Activated CD4-positive, alpha-beta T cell treated with anti-CD3 and anti-CD28 coated beads for 36 hours (primary cell): ENCODE measurements at regions of chr2 and their contacts with region 1.

Region 1: DNA sequence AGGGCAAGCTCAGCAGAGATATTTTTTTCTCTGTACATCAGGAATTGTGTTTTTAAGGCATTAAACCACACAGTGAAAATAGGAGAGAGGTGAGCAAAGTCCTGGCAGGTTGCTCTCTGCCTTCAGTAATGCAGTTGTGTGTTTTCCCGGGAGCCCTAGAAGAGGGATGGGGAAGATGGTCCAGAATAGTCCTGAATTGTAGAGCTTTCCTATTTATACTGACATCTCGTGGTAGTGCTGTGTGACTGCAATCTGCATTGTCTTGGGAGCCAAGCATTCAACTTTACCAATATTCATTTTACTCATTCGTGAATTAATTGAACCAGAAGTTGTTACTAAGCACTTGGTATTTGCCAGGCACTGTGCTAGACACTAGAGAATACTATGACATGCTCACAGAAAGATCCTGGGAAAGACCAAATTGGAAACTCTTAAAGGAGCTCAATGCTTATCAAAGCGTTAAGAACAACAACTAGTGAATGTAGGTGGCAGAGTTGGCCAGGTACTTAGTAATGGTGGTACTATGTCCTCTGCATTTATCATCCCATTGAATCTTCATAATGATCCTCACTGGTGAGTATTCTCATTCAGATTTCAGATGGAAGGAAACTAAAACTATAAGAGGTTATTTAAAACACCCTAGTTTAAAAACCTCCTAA is 214.6 kb downstream of the TRIB2 start:
- DNase-seq: no peak
- ATAC-seq: no peak
- H3K4me3 Mint-ChIP-seq: no peak overlapping the region
- H3K27ac Mint-ChIP-seq: no peak overlapping the region
- H3K4me1 Mint-ChIP-seq: peaks cover 15% of the 10 kb centered on the region
- H3K27me3 Mint-ChIP-seq: peaks cover 11% of the 10 kb centered on the region

Region 2: GRCh38 chr2:11863513-11864328 is 1067.6 kb before region 1 on chr2:
- CTCF ChIA-PET with region 1: no interaction called
- POLR2A ChIA-PET with region 1: no interaction called
- intact Hi-C with region 1: loop called (anchors 1 to 5 kb)
- DNase-seq: peak; percentile 80
- ATAC-seq: peak; percentile 49
- H3K4me3 Mint-ChIP-seq: peak overlapping the region; percentile 11
- H3K27ac Mint-ChIP-seq: no peak overlapping the region
- H3K4me1 Mint-ChIP-seq: peaks cover 29% of the 10 kb centered on the region
- H3K27me3 Mint-ChIP-seq: peaks cover 13% of the 10 kb centered on the region

Region 3: DNA sequence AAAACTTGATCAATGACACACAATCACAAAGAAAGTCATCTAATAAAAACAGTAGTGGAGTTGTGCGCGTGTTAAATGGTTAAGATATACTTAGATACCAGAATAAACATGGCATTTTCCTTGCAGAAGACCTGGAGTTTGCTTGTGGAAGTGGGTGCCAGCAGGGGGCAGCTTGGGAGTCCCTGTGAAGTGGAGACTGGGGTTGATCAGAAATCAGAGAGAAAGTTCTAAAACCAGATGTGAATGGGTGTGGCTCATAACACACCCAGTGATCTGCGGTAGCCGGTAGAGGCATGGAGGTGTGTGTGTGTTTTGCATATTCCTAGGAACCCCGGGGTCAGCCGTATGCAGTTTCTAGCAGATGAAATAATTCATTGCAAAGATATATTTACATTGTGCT is 514.7 kb before region 1 on chr2:
- CTCF ChIA-PET with region 1: interaction called, 3 read pairs
- POLR2A ChIA-PET with region 1: no interaction called
- intact Hi-C with region 1: loop called in 1 of 2 experiments (anchors 10 kb)
- DNase-seq: peak; percentile 69
- ATAC-seq: peak; percentile 43
- H3K4me3 Mint-ChIP-seq: no peak overlapping the region
- H3K27ac Mint-ChIP-seq: no peak overlapping the region
- H3K4me1 Mint-ChIP-seq: peaks cover 36% of the 10 kb centered on the region
- H3K27me3 Mint-ChIP-seq: no peaks in the 10 kb centered on the region

Region 4: DNA sequence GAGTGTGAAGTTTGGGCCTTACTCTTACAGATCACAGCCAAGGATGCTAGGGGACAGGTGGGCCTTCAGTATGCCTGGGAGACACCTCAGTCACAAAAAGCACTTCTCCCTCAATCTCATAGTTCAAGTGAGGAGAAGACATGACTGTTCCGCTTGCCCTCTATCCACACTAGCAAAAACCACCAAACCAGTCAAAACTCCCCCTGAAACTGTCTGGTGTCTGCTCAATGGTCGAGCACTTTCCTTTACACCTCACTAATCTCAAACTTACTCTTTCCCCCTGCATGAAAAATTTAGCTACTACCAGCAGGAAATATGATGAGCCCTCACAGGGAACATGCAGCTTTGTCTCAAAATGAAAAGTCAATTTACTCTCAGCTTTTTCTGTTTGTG is 17.6 kb after region 1 on chr2:
- CTCF ChIA-PET with region 1: interaction called, 14 read pairs
- POLR2A ChIA-PET with region 1: no interaction called
- intact Hi-C with region 1: no loop called
- DNase-seq: peak; percentile 46
- ATAC-seq: peak; percentile 84
- H3K4me3 Mint-ChIP-seq: no peak overlapping the region
- H3K27ac Mint-ChIP-seq: peak overlapping the region; percentile 26
- H3K4me1 Mint-ChIP-seq: peaks cover 10% of the 10 kb centered on the region
- H3K27me3 Mint-ChIP-seq: peaks cover 17% of the 10 kb centered on the region

Region 5: GRCh38 chr2:12965540-12966269 is 34.4 kb after region 1 on chr2:
- CTCF ChIA-PET with region 1: interaction called, 11 read pairs
- POLR2A ChIA-PET with region 1: no interaction called
- intact Hi-C with region 1: no loop called
- DNase-seq: no peak
- ATAC-seq: peak; percentile 90
- H3K4me3 Mint-ChIP-seq: no peak overlapping the region
- H3K27ac Mint-ChIP-seq: no peak overlapping the region
- H3K4me1 Mint-ChIP-seq: peaks cover 15% of the 10 kb centered on the region
- H3K27me3 Mint-ChIP-seq: peaks cover 11% of the 10 kb centered on the region

Region 6: GRCh38 chr2:13558368-13558767 is 627.1 kb after region 1 on chr2:
- CTCF ChIA-PET with region 1: no interaction called
- POLR2A ChIA-PET with region 1: no interaction called
- intact Hi-C with region 1: no loop called
- DNase-seq: no peak
- ATAC-seq: no peak
- H3K4me3 Mint-ChIP-seq: no peak overlapping the region
- H3K27ac Mint-ChIP-seq: no peak overlapping the region
- H3K4me1 Mint-ChIP-seq: no peaks in the 10 kb centered on the region
- H3K27me3 Mint-ChIP-seq: no peaks in the 10 kb centered on the region